ENCODE measurements at regions of chr6 and their contacts with region 1.

Region 1: DNA sequence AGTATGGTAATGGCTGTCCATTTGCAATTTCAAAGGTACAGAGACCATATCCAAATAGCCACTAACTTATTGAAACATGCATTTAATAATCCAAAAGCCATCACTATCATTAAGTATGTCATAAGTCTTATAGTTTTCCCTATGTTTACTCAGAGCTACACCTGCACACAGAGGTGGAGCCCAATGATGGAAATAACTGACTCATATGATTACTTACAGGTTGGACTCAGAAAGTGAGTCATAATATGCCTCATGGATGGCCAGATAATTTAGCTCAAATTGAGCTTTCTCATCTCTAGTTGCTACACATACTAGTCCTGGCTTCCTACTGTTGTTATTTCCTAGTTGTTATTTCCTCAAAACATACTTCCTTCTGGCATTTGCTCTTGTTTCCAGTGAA is 104.4 kb upstream of the KHDRBS2 start:
- H3K4me3 Mint-ChIP-seq: no peak overlapping the region
- H3K27ac Mint-ChIP-seq: no peak overlapping the region
- H3K4me1 Mint-ChIP-seq: no peaks in the 10 kb centered on the region
- H3K27me3 Mint-ChIP-seq: no peaks in the 10 kb centered on the region

Region 2: DNA sequence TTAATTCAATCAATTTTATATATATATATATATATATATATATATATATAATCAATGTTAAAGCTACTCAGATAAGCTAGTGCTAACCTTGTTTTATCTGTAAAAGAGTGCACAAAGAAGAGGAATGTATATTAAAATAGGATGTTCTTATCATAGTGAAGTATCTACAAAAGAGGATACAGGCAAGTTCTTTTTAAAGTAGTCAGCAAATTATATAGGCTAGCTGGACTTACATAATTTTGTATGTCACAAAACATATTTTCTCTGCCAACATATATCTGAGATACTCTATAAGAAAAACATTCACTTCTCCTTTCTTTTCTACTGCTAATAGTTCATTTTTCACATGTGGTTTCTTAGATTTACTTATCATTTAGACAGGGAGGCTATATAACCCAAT is 144.3 kb before region 1 on chr6:
- intact Hi-C with region 1: no loop called
- H3K4me3 Mint-ChIP-seq: no peak overlapping the region
- H3K27ac Mint-ChIP-seq: no peak overlapping the region
- H3K4me1 Mint-ChIP-seq: no peaks in the 10 kb centered on the region
- H3K27me3 Mint-ChIP-seq: no peaks in the 10 kb centered on the region

Region 3: DNA sequence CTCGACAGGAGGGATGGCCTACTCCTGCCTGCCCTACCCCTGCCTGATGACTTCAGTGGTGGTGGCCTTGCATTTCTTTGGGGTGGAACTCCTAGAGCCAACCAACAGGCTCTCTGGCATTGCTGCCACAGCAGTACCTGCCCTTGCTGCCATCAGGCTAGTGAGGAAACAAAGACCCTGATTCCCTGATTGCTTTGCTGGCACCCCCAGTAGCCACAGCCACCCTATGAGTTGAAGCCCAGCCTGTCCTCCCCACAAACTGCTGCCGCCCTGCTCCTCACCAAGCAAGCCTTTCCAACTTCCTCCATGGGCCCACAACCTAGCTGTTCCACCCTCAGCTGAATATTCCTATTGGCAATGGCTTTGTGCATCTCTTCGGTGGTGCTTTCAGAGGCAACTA is 51.9 kb before region 1 on chr6:
- intact Hi-C with region 1: loop called (anchors 10 kb)
- H3K4me3 Mint-ChIP-seq: no peak overlapping the region
- H3K27ac Mint-ChIP-seq: no peak overlapping the region
- H3K4me1 Mint-ChIP-seq: no peaks in the 10 kb centered on the region
- H3K27me3 Mint-ChIP-seq: no peaks in the 10 kb centered on the region